Brain microvascular endothelial cell (primary cell): ENCODE measurements at regions of chr6 and their contacts with region 1.

Region 1: GRCh38 chr6:41787219-41787917 is at the start of gene TOMM6:
- DNase-seq: peak; percentile 90
- H3K4me3 ChIP-seq: peak within 1 kb of the TSS; percentile 100
- H3K27ac ChIP-seq: peak within 1 kb of the TSS; percentile 74
- H3K27me3 ChIP-seq: no peaks in the 10 kb centered on the region
- CTCF ChIP-seq: peak; percentile 83

Region 2: GRCh38 chr6:41505122-41506049 is 282.0 kb before region 1 on chr6:
- in situ Hi-C with region 1: no loop called
- DNase-seq: peak; percentile 39
- H3K4me3 ChIP-seq: peak overlapping the region; percentile 30
- H3K27ac ChIP-seq: no peak overlapping the region
- H3K27me3 ChIP-seq: peaks cover 10% of the 10 kb centered on the region
- CTCF ChIP-seq: no peak

Region 3: DNA sequence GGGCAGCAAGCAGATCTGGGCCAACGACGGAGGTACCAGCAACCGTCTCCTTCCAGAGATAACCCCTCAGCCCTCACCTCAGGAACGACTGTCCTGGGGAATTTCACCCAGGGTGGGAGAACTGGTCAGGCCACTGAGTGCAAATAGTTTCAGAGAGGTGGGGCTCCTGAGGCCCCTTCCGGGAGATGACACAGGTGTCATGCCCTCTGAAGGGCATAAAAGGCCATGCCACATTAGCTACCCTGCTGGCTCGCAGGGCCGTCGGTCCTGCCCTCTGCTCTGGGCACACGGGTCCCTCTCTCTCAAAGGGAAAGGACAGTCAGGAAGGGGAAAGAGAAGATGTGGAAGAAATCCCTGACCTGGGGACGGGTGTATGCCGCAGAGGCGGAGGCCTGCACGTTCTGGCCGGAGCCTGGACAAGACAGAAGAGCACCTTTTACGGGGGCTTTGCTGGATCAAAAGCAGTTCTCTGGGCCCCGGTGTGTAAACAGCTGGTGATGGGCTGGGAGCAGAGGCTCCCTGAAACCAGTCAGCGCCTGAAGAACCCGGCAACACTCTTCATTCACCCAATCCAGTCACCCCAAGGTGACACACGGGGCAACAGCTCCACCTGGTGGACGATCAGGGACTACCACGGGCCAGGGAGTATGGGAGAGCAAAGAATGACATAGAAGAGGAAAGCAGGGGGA is 256.6 kb after region 1 on chr6:
- in situ Hi-C with region 1: loop called (anchors 25 kb)
- DNase-seq: peak; percentile 82
- H3K4me3 ChIP-seq: peak overlapping the region; percentile 9
- H3K27ac ChIP-seq: no peak overlapping the region
- H3K27me3 ChIP-seq: no peaks in the 10 kb centered on the region
- CTCF ChIP-seq: peak; percentile 99